ENCODE measurements at regions of chr10 and their contacts with region 1.

Region 1: GRCh38 chr10:100912605-100913469 is at the start of gene SLF2:
- DNase-seq: peak; percentile 75 to 96 (median 89)
- ATAC-seq: peak; percentile 84
- H3K4me3 ChIP-seq: peak within 1 kb of the TSS; percentile 98 to 100
- H3K4me3 Mint-ChIP-seq: peak within 1 kb of the TSS; percentile 99
- H3K27ac ChIP-seq: peak within 1 kb of the TSS; percentile 67 to 79
- H3K27ac Mint-ChIP-seq: peak within 1 kb of the TSS; percentile 98
- H3K4me1 ChIP-seq: peaks cover 21% of the 10 kb centered on the region
- H3K4me1 Mint-ChIP-seq: peaks cover 48% of the 10 kb centered on the region
- H3K27me3 ChIP-seq: no peaks in the 10 kb centered on the region
- H3K27me3 Mint-ChIP-seq: no peaks in the 10 kb centered on the region
- CTCF ChIP-seq: no peak
- total RNA-seq, gene SLF2: 8.0 to 8.3 TPM

Region 2: GRCh38 chr10:100185364-100186252 is 727.2 kb before region 1 on chr10 and contains the start of gene ERLIN1:
- CTCF ChIA-PET with region 1: no interaction called
- POLR2A ChIA-PET with region 1: no interaction called
- intact Hi-C with region 1: loop called in 1 of 2 experiments (anchors 10 kb)
- DNase-seq: peak; percentile 78 to 95 (median 91)
- ATAC-seq: peak; percentile 93
- H3K4me3 ChIP-seq: peak within 1 kb of the TSS; percentile 68 to 96
- H3K4me3 Mint-ChIP-seq: peak within 1 kb of the TSS; percentile 98
- H3K27ac ChIP-seq: peak within 1 kb of the TSS; percentile 85 to 89
- H3K27ac Mint-ChIP-seq: peak within 1 kb of the TSS; percentile 95
- H3K4me1 ChIP-seq: peaks cover 24% of the 10 kb centered on the region
- H3K4me1 Mint-ChIP-seq: peaks cover 64% of the 10 kb centered on the region
- H3K27me3 ChIP-seq: no peaks in the 10 kb centered on the region
- H3K27me3 Mint-ChIP-seq: no peaks in the 10 kb centered on the region
- CTCF ChIP-seq: no peak
- total RNA-seq, gene ERLIN1: 2.0 to 3.1 TPM

Region 3: GRCh38 chr10:100827819-100828737 is 84.8 kb before region 1 on chr10:
- CTCF ChIA-PET with region 1: no interaction called
- POLR2A ChIA-PET with region 1: no interaction called
- intact Hi-C with region 1: loop called in 1 of 2 experiments (anchors 2 kb)
- DNase-seq: peak in 5 of 9 experiments; percentile 21 to 60 (median 42)
- ATAC-seq: peak; percentile 35
- H3K4me3 ChIP-seq: peak overlapping the region; percentile 47 to 52
- H3K4me3 Mint-ChIP-seq: peak overlapping the region; percentile 85
- H3K27ac ChIP-seq: no peak overlapping the region
- H3K27ac Mint-ChIP-seq: no peak overlapping the region
- H3K4me1 ChIP-seq: peaks cover 38% of the 10 kb centered on the region
- H3K4me1 Mint-ChIP-seq: peaks cover 25% of the 10 kb centered on the region
- H3K27me3 ChIP-seq: peaks cover 40 to 64% of the 10 kb centered on the region in 2 experiments
- H3K27me3 Mint-ChIP-seq: peaks cover 74% of the 10 kb centered on the region
- CTCF ChIP-seq: no peak

Region 4: GRCh38 chr10:101012525-101013364 is 99.9 kb after region 1 on chr10:
- CTCF ChIA-PET with region 1: interaction called, 10 read pairs
- POLR2A ChIA-PET with region 1: no interaction called
- intact Hi-C with region 1: no loop called
- DNase-seq: peak; percentile 41 to 85 (median 78)
- ATAC-seq: peak; percentile 86
- H3K4me3 ChIP-seq: no peak overlapping the region
- H3K4me3 Mint-ChIP-seq: no peak overlapping the region
- H3K27ac ChIP-seq: no peak overlapping the region
- H3K27ac Mint-ChIP-seq: no peak overlapping the region
- H3K4me1 ChIP-seq: peaks cover 6% of the 10 kb centered on the region
- H3K4me1 Mint-ChIP-seq: peaks cover 13% of the 10 kb centered on the region
- H3K27me3 ChIP-seq: peaks cover 13 to 16% of the 10 kb centered on the region in 2 experiments
- H3K27me3 Mint-ChIP-seq: peaks cover 33% of the 10 kb centered on the region
- CTCF ChIP-seq: peak; percentile 83

Region 5: GRCh38 chr10:101060036-101060950 is 147.5 kb after region 1 on chr10:
- CTCF ChIA-PET with region 1: no interaction called
- POLR2A ChIA-PET with region 1: interaction called, 5 read pairs
- intact Hi-C with region 1: loop called in 1 of 2 experiments (anchors 5 kb)
- DNase-seq: peak; percentile 80 to 96 (median 91)
- ATAC-seq: peak; percentile 67
- H3K4me3 ChIP-seq: peak overlapping the region; percentile 85 to 94
- H3K4me3 Mint-ChIP-seq: peak overlapping the region; percentile 98
- H3K27ac ChIP-seq: peak overlapping the region; percentile 55 to 92
- H3K27ac Mint-ChIP-seq: peak overlapping the region; percentile 91
- H3K4me1 ChIP-seq: peaks cover 27% of the 10 kb centered on the region
- H3K4me1 Mint-ChIP-seq: peaks cover 27% of the 10 kb centered on the region
- H3K27me3 ChIP-seq: peaks cover 20 to 27% of the 10 kb centered on the region in 2 experiments
- H3K27me3 Mint-ChIP-seq: peaks cover 18% of the 10 kb centered on the region
- CTCF ChIP-seq: peak; percentile 95